Activated T-helper 2 cell treated with anti-CD3 and anti-CD28 coated beads, Interferon-gamma antibody, Interleukin-2, Interleukin-4, amounts not matched to agents 10 μg/mL and 5 μg/mL and 100 μg/mL, durations not matched to agents 14 hours and 24 hours and 36 hours (primary cell): ENCODE measurements at regions of chr7 and their contacts with region 1.

Region 1: GRCh38 chr7:33744293-33745075 is 160.9 kb upstream of the BMPER start:
- DNase-seq: no peak
- H3K4me3 Mint-ChIP-seq: no peak overlapping the region
- H3K27ac Mint-ChIP-seq: no peak overlapping the region
- H3K4me1 Mint-ChIP-seq: no peaks in the 10 kb centered on the region
- H3K27me3 Mint-ChIP-seq: no peaks in the 10 kb centered on the region

Region 2: GRCh38 chr7:33185786-33186185 is 558.7 kb before region 1 on chr7:
- intact Hi-C with region 1: loop called (anchors 10 kb)
- DNase-seq: no peak
- H3K4me3 Mint-ChIP-seq: no peak overlapping the region
- H3K27ac Mint-ChIP-seq: no peak overlapping the region
- H3K4me1 Mint-ChIP-seq: peaks cover 5% of the 10 kb centered on the region
- H3K27me3 Mint-ChIP-seq: no peaks in the 10 kb centered on the region

Region 3: DNA sequence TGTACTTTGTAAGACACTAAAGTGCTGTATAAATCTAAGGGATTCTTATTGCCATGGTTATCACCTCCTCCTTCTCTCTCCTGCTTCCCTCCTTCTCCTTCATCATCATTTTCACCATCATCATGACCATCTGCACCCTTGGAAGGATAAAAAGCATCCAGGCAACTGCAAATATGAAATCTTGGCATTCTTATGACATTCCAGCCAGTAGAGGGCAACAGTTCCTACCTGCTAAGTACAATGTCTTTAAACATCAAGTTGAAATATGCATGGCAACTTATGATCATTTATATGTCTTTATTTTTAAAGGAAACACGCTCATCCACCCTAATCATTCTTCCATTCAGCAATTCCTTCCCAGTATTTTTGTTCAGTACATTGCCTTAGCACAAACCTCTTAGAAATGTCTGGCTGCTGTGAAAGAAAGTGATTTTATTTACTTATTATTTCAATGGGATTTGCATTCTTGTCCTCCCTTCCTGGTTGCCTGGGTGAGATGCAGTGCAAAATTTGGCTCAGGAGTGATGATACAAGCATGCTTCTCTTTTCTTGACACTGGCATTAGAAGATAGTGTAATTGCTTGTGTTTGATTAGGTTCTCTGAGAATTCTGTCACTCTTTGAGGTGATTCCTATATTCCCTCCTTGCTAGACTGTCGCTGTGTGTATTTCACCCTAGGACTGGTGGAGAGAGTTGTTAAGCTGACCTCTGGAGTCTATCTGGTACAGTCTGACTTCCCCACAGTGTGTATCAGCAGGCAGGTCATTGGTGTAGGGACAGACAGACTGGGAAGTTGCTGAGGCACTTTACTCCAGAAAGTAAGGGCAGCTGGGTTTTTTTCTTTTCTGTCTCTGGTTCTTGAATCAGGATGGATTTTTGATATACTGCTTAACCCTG is 27.7 kb before region 1 on chr7:
- intact Hi-C with region 1: no loop called
- DNase-seq: no peak
- H3K4me3 Mint-ChIP-seq: no peak overlapping the region
- H3K27ac Mint-ChIP-seq: no peak overlapping the region
- H3K4me1 Mint-ChIP-seq: no peaks in the 10 kb centered on the region
- H3K27me3 Mint-ChIP-seq: no peaks in the 10 kb centered on the region

Region 4: GRCh38 chr7:33757562-33758165 is 13.2 kb after region 1 on chr7:
- intact Hi-C with region 1: no loop called
- DNase-seq: no peak
- H3K4me3 Mint-ChIP-seq: no peak overlapping the region
- H3K27ac Mint-ChIP-seq: no peak overlapping the region
- H3K4me1 Mint-ChIP-seq: no peaks in the 10 kb centered on the region
- H3K27me3 Mint-ChIP-seq: no peaks in the 10 kb centered on the region